Activated CD4-positive, alpha-beta T cell treated with anti-CD3 and anti-CD28 coated beads, Interleukin-2, amount 10 ng/mL, durations not matched to agents 7 days and 5 days (primary cell): ENCODE measurements at regions of chr7 and their contacts with region 1.

Region 1: DNA sequence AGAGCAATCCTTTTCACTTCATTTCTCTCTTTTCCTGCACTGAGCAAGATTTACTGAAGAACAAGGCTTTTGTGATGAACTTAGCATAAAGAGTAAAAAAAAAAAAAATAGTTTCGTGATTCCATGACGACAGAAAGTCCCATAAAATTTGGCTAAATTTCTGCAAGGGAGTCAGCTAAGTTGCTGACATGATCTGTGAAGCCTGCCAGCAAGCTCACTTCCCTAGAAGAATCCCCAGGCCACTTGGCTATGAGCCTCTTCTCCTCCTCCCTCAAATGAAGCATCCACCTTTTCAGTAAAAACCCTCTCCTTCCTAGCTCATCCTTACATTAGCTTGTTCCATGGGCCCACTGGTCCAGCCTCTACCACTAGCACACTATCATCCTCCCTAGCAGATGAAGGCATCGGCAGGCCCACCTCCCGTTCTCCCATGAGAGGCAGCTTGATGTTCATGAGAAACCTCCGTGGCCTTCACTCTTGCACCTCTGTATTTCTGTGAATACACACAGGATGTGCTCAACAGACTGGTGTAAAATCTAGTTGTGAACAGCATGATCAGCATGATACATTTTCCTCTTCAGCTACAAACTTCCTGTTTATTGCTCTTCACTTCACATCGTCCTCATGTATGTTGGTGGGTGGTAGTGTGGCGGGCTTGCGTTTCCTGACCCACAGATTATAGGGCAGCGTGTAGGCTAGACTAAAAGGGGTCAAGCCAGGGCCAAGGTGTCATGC is 30.9 kb downstream of the GIMAP8 start:
- DNase-seq: peak; percentile 68
- H3K4me3 Mint-ChIP-seq: peak overlapping the region; percentile 75
- H3K27ac Mint-ChIP-seq: peak overlapping the region; percentile 96
- H3K4me1 Mint-ChIP-seq: peaks cover 92% of the 10 kb centered on the region
- H3K27me3 Mint-ChIP-seq: no peaks in the 10 kb centered on the region

Region 2: DNA sequence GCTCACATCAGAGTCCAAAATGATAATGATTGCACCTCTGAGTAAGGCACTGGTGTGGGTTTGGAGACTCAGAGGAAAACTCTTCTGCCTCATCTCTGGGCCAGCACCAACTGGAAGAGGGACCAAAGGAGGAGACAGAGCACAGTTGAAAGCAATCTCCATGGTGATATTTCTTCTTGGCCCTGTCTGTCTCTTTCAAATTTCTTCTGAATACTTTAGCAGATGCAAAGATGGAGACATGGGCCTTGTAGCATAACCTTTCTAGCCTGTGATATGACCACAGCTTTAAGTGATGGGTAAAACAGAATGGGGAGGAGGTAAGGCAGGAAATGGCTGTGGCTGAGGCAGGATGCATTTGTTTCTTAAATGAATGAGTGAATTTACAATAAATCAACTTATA is 21.2 kb after region 1 on chr7:
- CTCF ChIA-PET with region 1: interaction called, 14 read pairs
- POLR2A ChIA-PET with region 1: interaction called, 9 read pairs
- DNase-seq: peak; percentile 73
- H3K4me3 Mint-ChIP-seq: peak overlapping the region; percentile 58
- H3K27ac Mint-ChIP-seq: peak overlapping the region; percentile 92
- H3K4me1 Mint-ChIP-seq: peaks cover 82% of the 10 kb centered on the region
- H3K27me3 Mint-ChIP-seq: no peaks in the 10 kb centered on the region

Region 3: DNA sequence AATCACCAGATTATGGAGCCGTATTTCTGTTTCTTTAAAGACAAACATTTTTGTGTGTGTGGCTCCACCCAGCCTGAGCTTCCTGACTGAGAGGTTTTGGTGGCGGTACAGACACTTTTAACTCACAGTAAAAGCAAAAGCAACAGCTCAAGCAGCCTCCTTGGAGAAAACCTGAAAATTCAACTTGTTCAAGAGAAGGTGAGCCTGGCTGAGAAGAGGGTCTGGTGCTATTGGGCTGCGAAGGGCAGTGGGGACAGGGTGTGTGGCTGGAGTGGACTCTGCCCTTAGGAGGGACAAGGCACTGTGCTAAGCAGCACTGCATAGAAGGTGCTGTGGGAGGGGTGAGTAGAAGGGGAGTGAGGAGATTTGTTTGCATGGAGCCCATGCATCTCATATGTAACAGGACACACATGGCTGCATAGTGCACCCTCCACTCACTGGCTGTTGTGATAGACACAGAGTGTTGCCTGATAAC is 33.4 kb after region 1 on chr7 and contains the start of gene GIMAP7:
- CTCF ChIA-PET with region 1: interaction called, 5 read pairs
- POLR2A ChIA-PET with region 1: interaction called, 27 read pairs
- DNase-seq: peak; percentile 86
- H3K4me3 Mint-ChIP-seq: peak within 1 kb of the TSS; percentile 98
- H3K27ac Mint-ChIP-seq: peak within 1 kb of the TSS; percentile 97
- H3K4me1 Mint-ChIP-seq: peaks cover 48% of the 10 kb centered on the region
- H3K27me3 Mint-ChIP-seq: no peaks in the 10 kb centered on the region
- total RNA-seq, gene GIMAP7: 239 to 244 TPM

Region 4: GRCh38 chr7:150556521-150557138 is 75.3 kb after region 1 on chr7:
- CTCF ChIA-PET with region 1: no interaction called
- POLR2A ChIA-PET with region 1: no interaction called
- DNase-seq: peak; percentile 66
- H3K4me3 Mint-ChIP-seq: peak overlapping the region; percentile 48
- H3K27ac Mint-ChIP-seq: peak overlapping the region; percentile 94
- H3K4me1 Mint-ChIP-seq: peaks cover 58% of the 10 kb centered on the region
- H3K27me3 Mint-ChIP-seq: no peaks in the 10 kb centered on the region

Region 5: GRCh38 chr7:150620617-150621371 is 139.4 kb after region 1 on chr7:
- CTCF ChIA-PET with region 1: interaction called, 10 read pairs
- POLR2A ChIA-PET with region 1: no interaction called
- DNase-seq: no peak
- H3K4me3 Mint-ChIP-seq: peak overlapping the region; percentile 28
- H3K27ac Mint-ChIP-seq: peak overlapping the region; percentile 74
- H3K4me1 Mint-ChIP-seq: peaks cover 68% of the 10 kb centered on the region
- H3K27me3 Mint-ChIP-seq: no peaks in the 10 kb centered on the region